ENCODE measurements at regions of chr11 and their contacts with region 1.

Region 1: DNA sequence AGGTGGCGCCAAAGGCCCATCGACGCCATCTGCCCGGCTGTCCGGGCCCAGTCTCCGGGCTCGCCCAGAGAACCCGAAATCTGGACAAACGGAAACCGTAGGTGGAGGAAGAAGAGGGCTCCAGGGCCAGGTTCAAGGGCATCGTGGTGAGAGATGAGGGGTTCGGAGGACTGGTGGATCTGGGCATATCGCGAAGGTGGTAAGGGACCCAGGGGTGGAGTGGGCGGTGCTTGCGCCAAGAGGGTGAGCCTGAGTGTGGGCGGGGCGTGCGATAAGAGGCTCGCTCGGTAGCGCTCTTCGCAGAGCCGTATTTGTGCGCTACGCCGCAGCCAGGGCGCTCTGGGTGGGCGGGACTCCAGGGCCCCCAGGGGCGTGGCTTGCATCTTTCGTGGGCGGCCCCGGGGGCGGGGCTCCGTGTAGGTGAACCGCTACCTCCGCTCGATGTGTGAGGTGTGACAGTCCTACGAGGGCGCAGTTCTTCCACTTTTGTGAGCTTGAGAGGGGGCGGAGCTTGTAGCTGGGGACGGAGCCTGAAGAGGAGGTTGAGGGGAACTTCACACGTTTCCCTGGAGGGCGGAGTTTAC is 4.8 kb downstream of the CD248 start:
- DNase-seq: peak; percentile 98
- ATAC-seq: peak; percentile 60
- H3K4me3 Mint-ChIP-seq: peak overlapping the region; percentile 92
- H3K27ac Mint-ChIP-seq: peak overlapping the region; percentile 96
- H3K4me1 Mint-ChIP-seq: peaks cover 22% of the 10 kb centered on the region
- H3K27me3 Mint-ChIP-seq: peaks cover 1% of the 10 kb centered on the region

Region 2: GRCh38 chr11:66288671-66289547 is 23.1 kb before region 1 on chr11 and contains the start of gene YIF1A:
- POLR2A ChIA-PET with region 1: interaction called, 14 read pairs
- DNase-seq: peak; percentile 96
- ATAC-seq: peak; percentile 97
- H3K4me3 Mint-ChIP-seq: peak within 1 kb of the TSS; percentile 93
- H3K27ac Mint-ChIP-seq: peak within 1 kb of the TSS; percentile 90
- H3K4me1 Mint-ChIP-seq: peaks cover 27% of the 10 kb centered on the region
- H3K27me3 Mint-ChIP-seq: peaks cover 29% of the 10 kb centered on the region
- total RNA-seq, gene YIF1A: 44.5 to 45.5 TPM

Region 3: DNA sequence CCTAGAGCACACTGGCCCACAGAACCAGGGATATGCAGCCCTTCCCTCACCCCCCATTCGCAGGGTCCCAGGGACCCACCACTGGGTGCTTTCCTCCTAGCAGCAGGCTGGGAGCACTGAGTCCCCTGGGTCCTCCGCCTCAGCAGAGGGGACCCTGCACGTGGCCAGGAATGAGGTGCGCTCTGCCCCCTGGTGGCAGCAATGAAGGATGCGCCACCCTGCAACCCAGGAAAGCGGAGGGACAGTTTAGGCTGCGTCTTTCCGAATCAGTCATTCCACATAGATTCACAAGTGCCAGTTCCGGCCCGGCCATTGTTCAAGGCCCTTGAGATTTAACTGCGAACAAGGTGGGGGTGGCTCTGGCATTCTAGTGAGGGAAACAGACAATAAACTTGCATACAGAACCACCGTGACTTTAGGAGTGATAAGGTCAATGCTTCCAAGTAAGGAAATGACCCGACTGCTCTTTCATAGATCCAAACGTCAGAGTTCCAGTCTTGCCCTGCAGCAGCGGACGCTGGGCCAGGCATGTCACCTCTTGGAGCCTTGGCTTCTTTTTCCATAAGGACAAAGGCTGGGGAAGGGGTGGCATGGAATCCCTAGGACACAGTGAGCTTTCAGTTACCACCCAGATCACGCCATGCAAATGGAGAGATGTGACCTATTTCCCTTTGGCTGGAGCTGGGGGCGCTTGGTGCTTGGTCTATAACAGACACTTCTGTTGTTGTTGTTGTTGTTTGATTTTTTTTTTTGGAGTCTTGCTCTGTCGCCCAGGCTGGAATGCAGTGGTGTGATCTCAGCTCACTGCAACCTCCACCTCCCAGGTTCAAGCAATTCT is 16.5 kb after region 1 on chr11:
- POLR2A ChIA-PET with region 1: interaction called, 215 read pairs
- DNase-seq: peak; percentile 85
- ATAC-seq: peak; percentile 59
- H3K4me3 Mint-ChIP-seq: peak overlapping the region; percentile 26
- H3K27ac Mint-ChIP-seq: peak overlapping the region; percentile 89
- H3K4me1 Mint-ChIP-seq: peaks cover 37% of the 10 kb centered on the region
- H3K27me3 Mint-ChIP-seq: no peaks in the 10 kb centered on the region

Region 4: DNA sequence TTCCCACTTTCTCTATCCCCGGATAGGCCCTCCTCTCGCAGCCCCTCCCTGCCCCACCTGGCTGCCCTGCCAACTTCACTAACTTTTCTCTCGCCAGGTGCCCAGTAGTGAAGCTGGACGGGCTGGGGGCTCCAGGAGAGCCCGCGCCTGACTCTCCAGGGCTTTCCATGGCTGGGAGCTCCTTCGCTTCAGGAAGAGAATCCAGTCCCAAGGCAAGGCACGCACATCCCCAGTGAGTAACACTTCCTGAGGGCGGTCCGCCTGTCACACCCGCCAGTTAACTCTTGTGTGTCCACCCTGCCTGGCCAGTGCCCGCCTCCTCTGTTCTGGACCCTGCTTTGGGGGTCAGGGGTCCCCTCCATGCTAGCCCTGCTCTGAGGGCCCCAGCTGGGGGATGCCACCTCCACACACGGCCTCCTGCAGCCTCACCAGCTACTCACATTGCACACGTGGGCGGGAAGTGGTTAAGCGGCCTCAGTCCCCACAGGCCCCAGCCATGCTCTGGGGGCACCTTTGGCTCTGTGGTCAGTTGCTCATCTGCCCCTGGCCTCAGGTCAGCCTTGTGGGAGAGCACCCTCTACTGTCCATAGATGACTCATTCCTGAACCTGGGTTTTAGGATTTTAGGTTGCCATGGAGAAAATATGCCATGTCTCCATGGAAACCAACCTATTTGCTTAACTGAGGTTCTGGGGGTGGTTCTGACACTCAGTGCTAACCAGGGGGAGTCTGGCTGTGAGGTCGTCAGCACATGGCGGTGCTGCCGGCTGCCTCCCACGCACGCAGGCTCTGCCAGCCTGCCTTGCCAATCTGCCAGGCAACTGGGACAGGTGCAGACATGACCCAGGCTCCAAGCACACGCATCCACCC is 24.4 kb after region 1 on chr11 and contains the start of gene RIN1:
- POLR2A ChIA-PET with region 1: interaction called, 94 read pairs
- DNase-seq: peak; percentile 77
- ATAC-seq: peak; percentile 76
- H3K4me3 Mint-ChIP-seq: peak within 1 kb of the TSS; percentile 70
- H3K27ac Mint-ChIP-seq: peak within 1 kb of the TSS; percentile 79
- H3K4me1 Mint-ChIP-seq: peaks cover 26% of the 10 kb centered on the region
- H3K27me3 Mint-ChIP-seq: no peaks in the 10 kb centered on the region
- total RNA-seq, gene RIN1: 3.0 to 5.7 TPM

Region 5: DNA sequence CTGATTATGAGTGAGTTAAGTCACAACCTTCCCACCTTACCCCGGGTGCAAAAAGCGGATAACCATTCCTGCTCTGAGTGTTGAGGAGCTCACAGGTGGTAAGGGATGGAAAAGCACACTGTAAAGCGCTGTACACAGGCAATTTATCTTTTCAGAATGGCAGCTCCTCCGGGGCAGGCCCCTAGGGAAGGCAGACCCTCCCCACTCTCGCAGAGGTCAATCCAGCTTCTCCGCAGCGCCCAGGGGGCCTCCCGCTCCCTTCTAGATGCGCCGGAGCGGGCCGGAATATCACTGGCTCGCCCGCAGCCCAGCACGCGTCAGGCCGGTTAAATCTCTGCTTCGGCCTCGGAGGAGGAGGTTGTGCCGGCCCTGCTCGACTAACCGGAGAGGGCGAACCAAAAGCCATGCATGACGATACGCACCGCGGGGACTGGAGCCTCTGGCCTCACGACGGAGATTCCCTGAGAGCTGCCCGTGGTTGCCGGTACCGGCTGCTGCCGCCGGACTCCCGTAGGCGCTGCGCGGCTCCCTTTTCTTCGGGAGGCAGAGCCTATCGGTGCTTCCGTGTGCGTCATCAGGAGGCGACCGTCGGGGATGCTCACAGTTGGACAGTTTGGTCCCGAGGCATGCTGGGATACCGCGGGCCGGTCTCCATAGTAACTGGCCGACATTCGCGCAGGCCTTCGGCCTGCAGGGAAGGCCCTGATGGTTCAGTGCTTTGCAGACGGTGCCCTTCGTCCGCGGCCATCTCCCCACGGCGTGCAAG is 32.7 kb after region 1 on chr11 and contains the start of gene BRMS1:
- POLR2A ChIA-PET with region 1: interaction called, 32 read pairs
- DNase-seq: peak; percentile 94
- ATAC-seq: peak; percentile 76
- H3K4me3 Mint-ChIP-seq: peak within 1 kb of the TSS; percentile 90
- H3K27ac Mint-ChIP-seq: peak within 1 kb of the TSS; percentile 91
- H3K4me1 Mint-ChIP-seq: peaks cover 35% of the 10 kb centered on the region
- H3K27me3 Mint-ChIP-seq: peaks cover 2% of the 10 kb centered on the region
- total RNA-seq, gene BRMS1: 45.4 to 47.8 TPM

Region 6: DNA sequence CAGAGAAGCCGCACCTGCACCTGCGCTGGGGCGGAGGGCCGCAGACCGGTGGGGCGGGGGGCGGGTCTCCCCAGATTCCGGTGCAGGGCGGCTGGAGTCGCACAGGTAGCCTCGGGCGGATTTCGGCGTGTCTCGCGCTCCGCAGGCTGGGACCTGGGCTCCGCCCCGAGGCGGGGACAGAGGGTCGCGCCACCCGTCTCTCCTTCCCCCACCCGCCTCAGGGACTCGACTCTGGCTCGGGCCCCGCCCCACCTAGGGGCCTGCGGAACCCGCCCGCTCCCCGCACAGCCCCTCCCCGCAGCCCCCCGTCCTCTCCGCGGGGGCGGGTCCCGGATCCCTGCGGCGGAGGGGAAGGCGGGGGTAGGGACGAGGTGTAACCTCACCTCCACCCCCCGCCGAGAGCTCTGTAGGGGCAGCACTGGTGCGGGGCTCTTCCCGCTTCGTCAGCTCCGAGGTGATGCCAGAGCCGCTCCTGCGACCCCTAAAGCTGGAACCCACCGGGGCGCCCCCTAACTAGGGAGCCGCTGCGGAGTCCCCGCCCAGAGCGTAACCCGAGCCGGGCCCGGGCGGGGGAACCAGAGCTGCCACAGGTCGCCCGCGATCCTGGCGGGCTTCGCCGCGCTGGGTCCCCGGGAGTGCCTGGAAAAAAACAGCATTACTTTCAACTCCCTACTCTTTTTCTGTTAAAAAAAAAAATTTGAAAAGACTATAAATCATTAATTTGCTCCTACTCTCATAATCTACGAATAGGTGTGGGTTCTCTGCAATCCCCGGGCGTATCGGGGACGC is 59.8 kb after region 1 on chr11 and contains the start of gene SLC29A2:
- POLR2A ChIA-PET with region 1: interaction called, 34 read pairs
- DNase-seq: peak; percentile 89
- ATAC-seq: peak; percentile 87
- H3K4me3 Mint-ChIP-seq: peak within 1 kb of the TSS; percentile 86
- H3K27ac Mint-ChIP-seq: peak within 1 kb of the TSS; percentile 96
- H3K4me1 Mint-ChIP-seq: peaks cover 14% of the 10 kb centered on the region
- H3K27me3 Mint-ChIP-seq: peaks cover 5% of the 10 kb centered on the region
- total RNA-seq, gene SLC29A2: 11.2 to 12.1 TPM

Measured in activated naive CD8-positive, alpha-beta T cell treated with anti-CD3 and anti-CD28 coated beads, Interleukin-2, amount 10 ng/mL, durations not matched to agents 7 days and 5 days (primary cell).